CD8-positive, alpha-beta T cell (primary cell): ENCODE measurements at regions of chr11 and their contacts with region 1.

Region 1: GRCh38 chr11:77198440-77198849 is 70.4 kb downstream of the MYO7A start:
- DNase-seq: no peak
- ATAC-seq: no peak
- H3K4me3 ChIP-seq: no peak overlapping the region
- H3K4me3 Mint-ChIP-seq: no peak overlapping the region
- H3K27ac ChIP-seq: no peak overlapping the region
- H3K27ac Mint-ChIP-seq: no peak overlapping the region
- H3K4me1 ChIP-seq: no peaks in the 10 kb centered on the region
- H3K4me1 Mint-ChIP-seq: no peaks in the 10 kb centered on the region
- H3K27me3 ChIP-seq: no peaks in the 10 kb centered on the region
- H3K27me3 Mint-ChIP-seq: no peaks in the 10 kb centered on the region
- CTCF ChIP-seq: no peak

Region 2: DNA sequence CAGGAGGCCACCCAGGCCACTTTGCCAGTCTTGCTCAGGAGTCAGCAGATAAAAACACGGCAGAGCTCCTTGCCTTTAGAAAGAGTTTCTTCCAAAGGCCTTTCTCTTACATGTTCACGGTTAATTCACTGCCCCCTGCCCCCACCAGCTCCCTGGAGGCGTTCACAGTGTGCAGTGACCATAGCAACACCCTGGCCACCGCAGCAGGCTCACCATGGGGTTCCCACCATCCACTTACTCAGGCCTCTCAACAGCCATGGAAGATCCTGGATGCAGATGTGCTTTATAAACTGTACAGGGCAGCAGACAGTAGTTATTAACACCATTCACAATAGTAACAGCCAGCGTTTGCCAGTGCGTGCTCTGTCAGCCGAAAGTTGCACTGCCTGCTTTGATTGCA is 81.0 kb before region 1 on chr11:
- CTCF ChIA-PET with region 1: no interaction called
- POLR2A ChIA-PET with region 1: no interaction called
- intact Hi-C with region 1: no loop called
- DNase-seq: no peak
- ATAC-seq: no peak
- H3K4me3 ChIP-seq: no peak overlapping the region
- H3K4me3 Mint-ChIP-seq: no peak overlapping the region
- H3K27ac ChIP-seq: no peak overlapping the region
- H3K27ac Mint-ChIP-seq: no peak overlapping the region
- H3K4me1 ChIP-seq: no peaks in the 10 kb centered on the region
- H3K4me1 Mint-ChIP-seq: no peaks in the 10 kb centered on the region
- H3K27me3 ChIP-seq: no peaks in the 10 kb centered on the region
- H3K27me3 Mint-ChIP-seq: no peaks in the 10 kb centered on the region
- CTCF ChIP-seq: no peak

Region 3: GRCh38 chr11:77141475-77141874 is 57.0 kb before region 1 on chr11:
- CTCF ChIA-PET with region 1: no interaction called
- POLR2A ChIA-PET with region 1: no interaction called
- intact Hi-C with region 1: no loop called
- DNase-seq: no peak
- ATAC-seq: no peak
- H3K4me3 ChIP-seq: no peak overlapping the region
- H3K4me3 Mint-ChIP-seq: no peak overlapping the region
- H3K27ac ChIP-seq: no peak overlapping the region
- H3K27ac Mint-ChIP-seq: no peak overlapping the region
- H3K4me1 ChIP-seq: peaks cover 13% of the 10 kb centered on the region
- H3K4me1 Mint-ChIP-seq: peaks cover 22% of the 10 kb centered on the region
- H3K27me3 ChIP-seq: no peaks in the 10 kb centered on the region
- H3K27me3 Mint-ChIP-seq: peaks cover 13% of the 10 kb centered on the region
- CTCF ChIP-seq: no peak

Region 4: GRCh38 chr11:77158041-77158695 is 40.3 kb before region 1 on chr11:
- CTCF ChIA-PET with region 1: no interaction called
- POLR2A ChIA-PET with region 1: no interaction called
- intact Hi-C with region 1: no loop called
- DNase-seq: no peak
- ATAC-seq: no peak
- H3K4me3 ChIP-seq: no peak overlapping the region
- H3K4me3 Mint-ChIP-seq: no peak overlapping the region
- H3K27ac ChIP-seq: no peak overlapping the region
- H3K27ac Mint-ChIP-seq: no peak overlapping the region
- H3K4me1 ChIP-seq: peaks cover 3% of the 10 kb centered on the region
- H3K4me1 Mint-ChIP-seq: peaks cover 7% of the 10 kb centered on the region
- H3K27me3 ChIP-seq: no peaks in the 10 kb centered on the region
- H3K27me3 Mint-ChIP-seq: no peaks in the 10 kb centered on the region
- CTCF ChIP-seq: no peak

Region 5: GRCh38 chr11:77278595-77279506 is 80.4 kb after region 1 on chr11:
- CTCF ChIA-PET with region 1: no interaction called
- POLR2A ChIA-PET with region 1: no interaction called
- intact Hi-C with region 1: loop called in 1 of 2 experiments (anchors 2 kb)
- DNase-seq: no peak
- ATAC-seq: no peak
- H3K4me3 ChIP-seq: no peak overlapping the region
- H3K4me3 Mint-ChIP-seq: no peak overlapping the region
- H3K27ac ChIP-seq: no peak overlapping the region
- H3K27ac Mint-ChIP-seq: no peak overlapping the region
- H3K4me1 ChIP-seq: no peaks in the 10 kb centered on the region
- H3K4me1 Mint-ChIP-seq: no peaks in the 10 kb centered on the region
- H3K27me3 ChIP-seq: no peaks in the 10 kb centered on the region
- H3K27me3 Mint-ChIP-seq: peaks cover 11% of the 10 kb centered on the region
- CTCF ChIP-seq: no peak

Region 6: GRCh38 chr11:77547863-77548551 is 349.6 kb after region 1 on chr11:
- CTCF ChIA-PET with region 1: interaction called, 17 read pairs
- POLR2A ChIA-PET with region 1: no interaction called
- intact Hi-C with region 1: no loop called
- DNase-seq: peak in 6 of 9 experiments; percentile 4 to 74 (median 34)
- ATAC-seq: no peak
- H3K4me3 ChIP-seq: no peak overlapping the region
- H3K4me3 Mint-ChIP-seq: no peak overlapping the region
- H3K27ac ChIP-seq: no peak overlapping the region
- H3K27ac Mint-ChIP-seq: no peak overlapping the region
- H3K4me1 ChIP-seq: no peaks in the 10 kb centered on the region
- H3K4me1 Mint-ChIP-seq: peaks cover 6% of the 10 kb centered on the region
- H3K27me3 ChIP-seq: no peaks in the 10 kb centered on the region
- H3K27me3 Mint-ChIP-seq: no peaks in the 10 kb centered on the region
- CTCF ChIP-seq: peak; percentile 66